GM12878 (cell line): ENCODE measurements at regions of chr2 and their contacts with region 1.

Region 1: GRCh38 chr2:73293534-73294171 is at the start of gene EGR4:
- DNase-seq: peak; percentile 34
- ATAC-seq: peak; percentile 91
- H3K4me3 ChIP-seq: peak within 1 kb of the TSS; percentile 55
- H3K27ac ChIP-seq: no peak within 1 kb of the TSS
- H3K4me1 ChIP-seq: peaks cover 4% of the 10 kb centered on the region; the same call in 1 of the 2 replicates
- H3K27me3 ChIP-seq: peaks cover 13 to 29% of the 10 kb centered on the region in 2 experiments
- CTCF ChIP-seq: no peak
- EP300 ChIP-seq: no peak
- POLR2A ChIP-seq: no peak
- RAD21 ChIP-seq: no peak
- polyA plus RNA-seq, gene EGR4: not detected

Region 2: GRCh38 chr2:73233154-73233931 is 60.3 kb before region 1 on chr2 and contains the start of gene PRADC1:
- CTCF ChIA-PET with region 1: interaction called, 99 read pairs
- POLR2A ChIA-PET with region 1: interaction called, 5 read pairs
- RAD21 ChIA-PET with region 1: interaction called, 21 read pairs
- SMC1A ChIA-PET with region 1: interaction called, 39 read pairs
- in situ Hi-C with region 1: no loop called
- intact Hi-C with region 1: no loop called
- DNase-seq: peak; percentile 97
- ATAC-seq: peak; percentile 93
- H3K4me3 ChIP-seq: peak within 1 kb of the TSS; percentile 78
- H3K27ac ChIP-seq: peak within 1 kb of the TSS; percentile 91
- H3K4me1 ChIP-seq: peaks cover 4% of the 10 kb centered on the region
- H3K27me3 ChIP-seq: no peaks in the 10 kb centered on the region
- CTCF ChIP-seq: no peak
- EP300 ChIP-seq: no peak
- POLR2A ChIP-seq: peak; percentile 77
- RAD21 ChIP-seq: no peak
- polyA plus RNA-seq, gene PRADC1: 3.7 to 8.1 TPM

Region 3: DNA sequence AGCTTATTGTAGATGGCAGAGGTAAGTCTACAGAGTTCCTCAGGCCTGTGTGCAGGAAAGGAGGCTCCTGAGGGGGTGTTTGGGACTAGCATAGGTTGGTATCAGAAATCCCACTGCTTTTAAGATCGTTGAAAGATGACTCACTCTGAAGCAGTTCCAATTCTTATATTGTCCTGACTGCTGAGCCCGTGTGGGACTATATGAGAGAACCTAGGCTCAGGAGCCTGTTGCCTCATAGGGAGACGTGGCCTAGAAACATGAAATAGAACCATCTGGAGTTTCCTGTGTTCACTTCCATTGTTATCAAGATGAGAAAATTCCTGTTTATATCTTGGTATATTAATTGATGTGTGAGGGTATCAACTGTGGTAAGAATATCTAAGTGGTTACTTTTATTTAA is 53.9 kb before region 1 on chr2:
- CTCF ChIA-PET with region 1: interaction called, 99 read pairs
- POLR2A ChIA-PET with region 1: interaction called, 4 read pairs
- RAD21 ChIA-PET with region 1: interaction called, 21 read pairs
- SMC1A ChIA-PET with region 1: interaction called, 39 read pairs
- in situ Hi-C with region 1: no loop called
- intact Hi-C with region 1: no loop called
- DNase-seq: no peak
- ATAC-seq: no peak
- H3K4me3 ChIP-seq: no peak overlapping the region
- H3K27ac ChIP-seq: no peak overlapping the region
- H3K4me1 ChIP-seq: no peaks in the 10 kb centered on the region
- H3K27me3 ChIP-seq: no peaks in the 10 kb centered on the region
- CTCF ChIP-seq: no peak
- EP300 ChIP-seq: no peak
- POLR2A ChIP-seq: no peak
- RAD21 ChIP-seq: no peak

Region 4: GRCh38 chr2:73257425-73258125 is 36.1 kb before region 1 on chr2:
- CTCF ChIA-PET with region 1: interaction called, 14 read pairs
- POLR2A ChIA-PET with region 1: no interaction called
- RAD21 ChIA-PET with region 1: no interaction called
- SMC1A ChIA-PET with region 1: interaction called, 5 read pairs
- in situ Hi-C with region 1: no loop called
- intact Hi-C with region 1: loop called (anchors 2 kb)
- DNase-seq: no peak
- ATAC-seq: no peak
- H3K4me3 ChIP-seq: no peak overlapping the region
- H3K27ac ChIP-seq: no peak overlapping the region
- H3K4me1 ChIP-seq: no peaks in the 10 kb centered on the region
- H3K27me3 ChIP-seq: no peaks in the 10 kb centered on the region
- CTCF ChIP-seq: no peak
- EP300 ChIP-seq: no peak
- POLR2A ChIP-seq: peak; percentile 7; the same call in 1 of the 2 replicates
- RAD21 ChIP-seq: no peak

Region 5: DNA sequence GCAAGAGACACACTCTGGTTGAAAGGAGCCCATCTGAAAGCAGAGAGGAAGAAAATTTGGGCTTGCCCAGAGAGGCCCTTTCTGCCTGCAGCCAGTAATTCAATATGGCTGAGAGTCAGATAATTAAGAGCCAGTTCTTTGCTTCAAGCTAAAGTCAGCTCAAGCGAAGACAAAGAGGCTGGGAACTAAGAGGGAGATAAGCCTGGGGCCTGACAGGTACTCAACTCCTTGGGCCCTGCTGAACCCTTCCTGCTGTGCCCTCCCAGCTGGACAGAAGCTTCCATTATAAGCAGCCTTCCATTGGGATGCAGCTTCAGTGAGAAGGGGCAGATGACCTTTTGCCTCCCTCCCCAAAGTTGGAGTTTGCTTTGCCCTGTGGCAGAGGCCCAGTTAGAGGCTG is 21.4 kb before region 1 on chr2:
- CTCF ChIA-PET with region 1: interaction called, 16 read pairs
- POLR2A ChIA-PET with region 1: interaction called, 3 read pairs
- RAD21 ChIA-PET with region 1: no interaction called
- SMC1A ChIA-PET with region 1: interaction called, 7 read pairs
- in situ Hi-C with region 1: no loop called
- intact Hi-C with region 1: no loop called
- DNase-seq: no peak
- ATAC-seq: no peak
- H3K4me3 ChIP-seq: no peak overlapping the region
- H3K27ac ChIP-seq: no peak overlapping the region
- H3K4me1 ChIP-seq: no peaks in the 10 kb centered on the region
- H3K27me3 ChIP-seq: no peaks in the 10 kb centered on the region
- CTCF ChIP-seq: no peak
- EP300 ChIP-seq: no peak
- POLR2A ChIP-seq: no peak
- RAD21 ChIP-seq: no peak

Region 6: DNA sequence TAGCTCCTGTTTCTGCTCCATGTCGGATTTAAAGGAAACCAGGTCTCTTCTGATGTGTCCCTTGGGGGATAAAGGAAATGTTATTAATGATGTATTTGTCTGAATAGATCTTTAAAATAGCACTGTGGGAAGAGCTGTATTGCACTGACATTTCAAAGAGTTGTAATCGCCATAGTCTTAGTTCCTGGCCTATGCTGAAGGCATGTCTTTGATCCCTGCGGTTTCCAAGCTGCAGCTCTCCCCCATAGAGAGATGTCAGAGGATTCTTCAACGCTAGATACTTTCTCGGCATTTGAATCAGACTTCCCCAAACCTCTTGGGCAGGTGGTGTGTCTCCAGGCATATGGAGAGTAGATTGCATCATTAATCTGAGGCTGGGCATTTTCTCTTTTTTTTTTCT is 308.1 kb after region 1 on chr2:
- CTCF ChIA-PET with region 1: no interaction called
- POLR2A ChIA-PET with region 1: no interaction called
- RAD21 ChIA-PET with region 1: no interaction called
- SMC1A ChIA-PET with region 1: no interaction called
- in situ Hi-C with region 1: no loop called
- intact Hi-C with region 1: no loop called
- DNase-seq: no peak
- ATAC-seq: no peak
- H3K4me3 ChIP-seq: no peak overlapping the region
- H3K27ac ChIP-seq: no peak overlapping the region
- H3K4me1 ChIP-seq: peaks cover 5% of the 10 kb centered on the region
- H3K27me3 ChIP-seq: no peaks in the 10 kb centered on the region
- CTCF ChIP-seq: no peak
- EP300 ChIP-seq: no peak
- POLR2A ChIP-seq: no peak
- RAD21 ChIP-seq: no peak

Region 7: GRCh38 chr2:73651586-73652230 is 358.1 kb after region 1 on chr2:
- CTCF ChIA-PET with region 1: no interaction called
- POLR2A ChIA-PET with region 1: no interaction called
- RAD21 ChIA-PET with region 1: no interaction called
- SMC1A ChIA-PET with region 1: no interaction called
- in situ Hi-C with region 1: no loop called
- intact Hi-C with region 1: no loop called
- DNase-seq: no peak
- ATAC-seq: no peak
- H3K4me3 ChIP-seq: no peak overlapping the region
- H3K27ac ChIP-seq: no peak overlapping the region
- H3K4me1 ChIP-seq: peaks cover 6% of the 10 kb centered on the region
- H3K27me3 ChIP-seq: no peaks in the 10 kb centered on the region
- CTCF ChIP-seq: no peak
- EP300 ChIP-seq: no peak
- POLR2A ChIP-seq: no peak
- RAD21 ChIP-seq: no peak